GM12878 (cell line): ENCODE measurements at regions of chr14 and their contacts with region 1.

Region 1: GRCh38 chr14:53929871-53930715 is 26.5 kb downstream of the BMP4 start:
- DNase-seq: no peak
- ATAC-seq: peak; percentile 54; the same call in 2 of the 3 replicates
- H3K4me3 ChIP-seq: no peak overlapping the region
- H3K27ac ChIP-seq: no peak overlapping the region
- H3K4me1 ChIP-seq: no peaks in the 10 kb centered on the region
- H3K27me3 ChIP-seq: no peaks in the 10 kb centered on the region; a peak in 1 of 4 replicates
- CTCF ChIP-seq: peak; percentile 60 to 71 (median 68)
- EP300 ChIP-seq: no peak
- POLR2A ChIP-seq: no peak
- RAD21 ChIP-seq: peak; percentile 59

Region 2: GRCh38 chr14:53824061-53824460 is 106.0 kb before region 1 on chr14:
- CTCF ChIA-PET with region 1: no interaction called
- POLR2A ChIA-PET with region 1: no interaction called
- RAD21 ChIA-PET with region 1: no interaction called
- SMC1A ChIA-PET with region 1: no interaction called
- in situ Hi-C with region 1: no loop called
- intact Hi-C with region 1: no loop called
- DNase-seq: peak; percentile 3
- ATAC-seq: peak; percentile 63
- H3K4me3 ChIP-seq: no peak overlapping the region
- H3K27ac ChIP-seq: no peak overlapping the region
- H3K4me1 ChIP-seq: no peaks in the 10 kb centered on the region
- H3K27me3 ChIP-seq: no peaks in the 10 kb centered on the region
- CTCF ChIP-seq: no peak
- EP300 ChIP-seq: no peak
- POLR2A ChIP-seq: no peak
- RAD21 ChIP-seq: no peak

Region 3: DNA sequence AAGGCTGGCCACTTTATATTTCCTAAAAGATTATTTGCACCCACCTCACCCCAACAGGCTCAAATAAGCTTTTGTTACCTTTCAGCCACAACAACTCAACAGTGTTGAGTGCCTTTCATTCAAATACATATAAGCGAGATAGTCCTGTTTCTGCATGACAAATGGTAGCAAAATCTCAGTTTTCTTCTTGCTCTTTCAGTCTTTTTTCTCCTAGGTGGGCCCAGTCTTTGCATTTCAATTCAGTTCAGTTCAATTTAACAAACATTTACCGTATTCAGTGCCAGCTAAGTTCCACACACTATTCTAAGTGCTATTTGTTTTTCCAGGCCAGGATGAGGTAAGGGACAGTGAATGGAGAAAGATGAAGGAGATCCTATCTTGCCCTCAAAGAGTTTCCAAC is 52.5 kb after region 1 on chr14:
- CTCF ChIA-PET with region 1: no interaction called
- POLR2A ChIA-PET with region 1: no interaction called
- RAD21 ChIA-PET with region 1: no interaction called
- SMC1A ChIA-PET with region 1: no interaction called
- in situ Hi-C with region 1: no loop called
- intact Hi-C with region 1: no loop called
- DNase-seq: no peak
- ATAC-seq: no peak
- H3K4me3 ChIP-seq: no peak overlapping the region
- H3K27ac ChIP-seq: no peak overlapping the region
- H3K4me1 ChIP-seq: no peaks in the 10 kb centered on the region
- H3K27me3 ChIP-seq: no peaks in the 10 kb centered on the region
- CTCF ChIP-seq: no peak
- EP300 ChIP-seq: no peak
- POLR2A ChIP-seq: no peak
- RAD21 ChIP-seq: no peak

Region 4: DNA sequence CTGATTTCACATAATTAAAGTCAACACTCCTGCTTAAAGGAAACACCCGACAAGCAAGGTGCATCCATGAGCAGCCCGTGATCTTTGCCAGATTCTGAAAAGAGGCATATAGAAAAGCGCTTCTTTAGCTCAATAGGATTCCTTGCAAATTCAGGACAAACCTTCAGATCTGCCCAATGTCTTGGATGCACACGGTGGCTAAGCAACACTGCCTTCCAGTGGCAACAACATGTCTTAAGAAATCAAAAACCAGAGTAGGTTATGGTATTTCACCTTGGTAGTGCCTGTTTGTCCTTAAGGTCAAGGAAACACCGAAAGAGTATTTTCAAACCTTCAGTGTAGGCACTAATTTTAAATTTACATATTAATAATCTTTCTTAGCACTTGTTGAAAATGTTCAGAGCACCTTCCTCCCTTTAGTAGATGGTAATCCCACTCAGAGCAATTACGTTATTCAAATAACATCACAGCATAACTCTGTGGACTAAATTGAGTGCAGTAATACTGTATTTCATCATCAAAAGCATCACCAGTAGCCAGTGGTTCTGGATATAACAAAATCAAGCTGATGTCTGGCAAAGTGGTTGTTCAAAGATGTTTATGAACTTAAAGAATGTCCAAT is 408.7 kb after region 1 on chr14:
- CTCF ChIA-PET with region 1: interaction called, 3 read pairs
- POLR2A ChIA-PET with region 1: no interaction called
- RAD21 ChIA-PET with region 1: no interaction called
- SMC1A ChIA-PET with region 1: no interaction called
- in situ Hi-C with region 1: no loop called
- intact Hi-C with region 1: loop called (anchors 10 kb)
- DNase-seq: no peak
- ATAC-seq: peak; percentile 18; the same call in 1 of the 3 replicates
- H3K4me3 ChIP-seq: no peak overlapping the region
- H3K27ac ChIP-seq: no peak overlapping the region
- H3K4me1 ChIP-seq: no peaks in the 10 kb centered on the region
- H3K27me3 ChIP-seq: peaks cover 0 to 2% of the 10 kb centered on the region in 2 experiments; a peak in 1 of 4 replicates
- CTCF ChIP-seq: peak; percentile 35 to 41 (median 41); a peak in 4 of 6 replicates
- EP300 ChIP-seq: no peak
- POLR2A ChIP-seq: no peak
- RAD21 ChIP-seq: peak; percentile 64